Activated CD4-positive, alpha-beta memory T cell treated with anti-CD3 and anti-CD28 coated beads, Interleukin-2, amount 10 ng/mL, durations not matched to agents 7 days and 5 days (primary cell): ENCODE measurements at regions of chr17 and their contacts with region 1.

Region 1: GRCh38 chr17:29777663-29778062 is 152.4 kb downstream of the SSH2 start:
- DNase-seq: no peak
- H3K4me3 Mint-ChIP-seq: no peak overlapping the region
- H3K27ac Mint-ChIP-seq: no peak overlapping the region
- H3K4me1 Mint-ChIP-seq: peaks cover 9% of the 10 kb centered on the region
- H3K27me3 Mint-ChIP-seq: no peaks in the 10 kb centered on the region

Region 2: DNA sequence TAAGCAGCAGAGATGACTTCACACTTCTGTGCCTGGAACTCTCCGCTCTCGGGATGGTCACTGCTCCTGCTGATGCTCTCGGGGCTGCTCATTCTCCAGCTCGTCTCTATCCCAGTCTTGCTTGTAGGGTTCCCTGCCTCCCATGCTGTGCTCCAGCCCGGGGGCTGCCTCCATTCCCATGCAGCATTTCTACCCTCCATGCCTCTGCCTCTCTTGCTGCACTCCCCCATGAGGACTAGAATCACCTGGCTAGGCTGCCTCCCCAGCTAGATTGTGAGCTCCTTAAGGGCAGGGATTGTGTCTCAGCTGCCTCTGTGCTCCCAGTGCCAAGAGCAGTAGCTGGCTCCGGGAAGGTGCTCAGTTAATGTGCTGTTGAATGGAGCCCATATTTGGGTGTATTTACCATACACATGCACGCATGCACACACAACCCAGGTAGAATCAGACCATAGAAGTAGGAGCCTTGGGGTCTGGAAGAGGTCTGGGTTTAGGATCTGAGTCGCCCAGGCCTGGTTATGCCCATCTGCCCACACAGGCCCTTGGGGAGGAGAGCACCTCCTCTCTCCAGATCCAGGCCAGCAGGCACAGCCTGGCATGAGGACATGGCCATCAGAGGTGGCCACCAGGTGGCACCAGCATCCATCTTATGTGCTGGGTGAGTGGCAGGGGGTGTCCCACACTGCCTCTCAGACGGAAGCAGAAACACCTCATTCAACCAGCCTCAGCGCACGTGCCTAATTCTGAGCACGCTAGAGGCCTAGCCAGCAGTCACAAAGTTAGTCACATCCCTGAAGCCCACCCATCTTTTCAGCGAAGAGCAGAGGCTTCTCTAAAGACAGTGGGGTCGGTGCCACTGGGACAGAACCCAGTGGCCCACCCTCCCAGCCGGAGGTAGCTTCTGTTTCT is 197.5 kb before region 1 on chr17:
- CTCF ChIA-PET with region 1: interaction called, 10 read pairs
- POLR2A ChIA-PET with region 1: no interaction called
- DNase-seq: peak; percentile 90
- H3K4me3 Mint-ChIP-seq: no peak overlapping the region
- H3K27ac Mint-ChIP-seq: peak overlapping the region; percentile 85
- H3K4me1 Mint-ChIP-seq: peaks cover 25% of the 10 kb centered on the region
- H3K27me3 Mint-ChIP-seq: no peaks in the 10 kb centered on the region

Region 3: DNA sequence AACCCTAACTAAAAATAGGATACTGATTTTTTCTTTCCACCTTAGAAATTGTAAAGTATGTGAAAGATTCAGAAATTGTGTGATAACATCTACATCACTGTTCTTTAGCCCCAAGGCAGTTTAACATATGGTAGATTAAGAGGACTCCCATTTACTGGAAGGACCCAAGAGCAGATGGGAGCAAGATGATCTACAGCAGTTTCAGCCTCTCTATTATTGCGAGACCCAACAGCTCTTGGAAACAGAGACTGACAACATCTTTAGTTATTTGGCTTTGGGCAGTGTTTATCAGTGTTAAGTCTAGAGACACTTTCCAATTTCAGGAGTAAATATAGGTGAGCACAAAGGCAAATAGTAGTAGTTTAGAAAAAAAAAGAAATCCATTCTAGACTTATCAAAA is 30.0 kb before region 1 on chr17:
- CTCF ChIA-PET with region 1: interaction called, 12 read pairs
- POLR2A ChIA-PET with region 1: no interaction called
- DNase-seq: no peak
- H3K4me3 Mint-ChIP-seq: no peak overlapping the region
- H3K27ac Mint-ChIP-seq: no peak overlapping the region
- H3K4me1 Mint-ChIP-seq: peaks cover 19% of the 10 kb centered on the region
- H3K27me3 Mint-ChIP-seq: no peaks in the 10 kb centered on the region